Activated CD4-positive, alpha-beta memory T cell treated with anti-CD3 and anti-CD28 coated beads, Interleukin-2, amount 10 ng/mL, durations not matched to agents 7 days and 5 days (primary cell): ENCODE measurements at regions of chr1 and their contacts with region 1.

Region 1: DNA sequence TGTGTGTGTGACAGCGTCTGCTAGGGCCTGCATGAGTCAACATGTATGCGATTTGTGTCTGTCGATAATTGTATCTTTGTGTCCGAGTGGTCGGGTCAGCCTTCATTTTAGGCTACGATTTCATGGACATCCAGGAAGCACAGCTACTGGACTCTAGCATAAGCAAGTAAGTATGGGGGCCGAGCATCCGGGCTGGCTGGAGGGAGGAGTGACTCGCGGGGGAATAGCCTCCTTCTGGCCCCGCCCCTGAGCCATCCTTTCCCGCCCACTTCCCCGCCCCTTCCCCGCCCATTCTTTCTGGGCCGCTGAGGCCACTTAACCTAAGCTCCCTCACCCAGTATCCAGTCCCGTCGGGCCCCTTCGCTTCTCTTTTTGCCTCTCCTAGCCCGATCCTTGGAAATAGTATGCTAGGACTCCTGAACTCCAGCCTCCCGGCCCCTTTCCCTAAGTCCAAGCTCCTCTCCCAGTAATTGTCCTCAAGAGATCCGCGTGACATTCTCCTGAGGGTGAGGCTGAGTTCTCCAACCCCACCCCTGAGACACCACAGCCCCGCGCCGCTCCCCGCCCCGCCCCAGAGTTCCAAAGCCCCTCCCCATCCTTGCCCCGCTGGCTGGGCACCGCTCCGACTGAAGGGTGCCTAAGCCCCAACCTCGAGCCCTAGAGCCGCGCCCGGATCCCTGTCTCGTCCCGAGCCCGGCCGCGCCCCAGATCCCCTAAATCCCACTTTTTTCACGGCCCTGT is 1.2 kb downstream of the MAP3K6 start:
- DNase-seq: peak; percentile 86
- H3K4me3 Mint-ChIP-seq: peak overlapping the region; percentile 83
- H3K27ac Mint-ChIP-seq: peak overlapping the region; percentile 83
- H3K4me1 Mint-ChIP-seq: peaks cover 39% of the 10 kb centered on the region
- H3K27me3 Mint-ChIP-seq: no peaks in the 10 kb centered on the region

Region 2: DNA sequence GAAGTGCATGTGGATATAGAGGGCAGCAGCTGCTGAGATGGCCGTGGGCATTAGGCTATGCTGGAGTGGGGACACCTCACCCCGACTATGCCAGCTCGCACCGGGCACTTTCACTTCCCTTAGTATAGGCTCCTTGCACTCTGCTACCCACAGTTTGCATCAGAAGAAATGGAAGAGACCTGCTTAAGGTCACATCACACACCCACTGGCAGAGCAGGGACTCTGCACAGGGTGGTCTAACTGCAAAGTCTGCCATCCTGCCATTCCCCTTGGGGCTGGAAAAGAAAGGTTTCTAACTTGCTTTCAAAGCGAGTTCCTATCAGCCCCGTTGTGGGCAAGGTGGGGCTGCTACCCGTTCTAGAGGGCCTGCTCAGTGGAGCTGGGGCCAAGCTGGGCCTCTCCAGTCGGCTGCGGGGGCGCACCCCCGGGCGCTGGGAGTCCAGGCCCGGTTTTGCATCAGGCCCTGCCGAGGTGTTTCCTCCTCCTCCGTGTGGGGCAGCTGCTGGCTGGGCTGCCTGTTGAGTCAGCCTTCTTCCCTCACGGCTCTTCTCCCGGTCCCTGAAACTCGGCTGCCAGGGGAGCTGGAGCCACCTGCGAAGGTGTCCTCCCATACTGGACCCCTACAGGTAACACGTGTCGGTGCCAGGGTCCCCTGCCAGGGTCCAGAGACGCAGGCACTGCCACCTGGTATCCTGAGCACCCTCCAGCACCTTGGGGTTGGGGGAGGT is 23.9 kb before region 1 on chr1 and contains the start of gene SYTL1:
- CTCF ChIA-PET with region 1: interaction called, 9 read pairs
- POLR2A ChIA-PET with region 1: interaction called, 30 read pairs
- DNase-seq: peak; percentile 79
- H3K4me3 Mint-ChIP-seq: peak within 1 kb of the TSS; percentile 93
- H3K27ac Mint-ChIP-seq: peak within 1 kb of the TSS; percentile 95
- H3K4me1 Mint-ChIP-seq: peaks cover 46% of the 10 kb centered on the region
- H3K27me3 Mint-ChIP-seq: no peaks in the 10 kb centered on the region
- total RNA-seq, gene SYTL1: 124 to 136 TPM

Region 3: DNA sequence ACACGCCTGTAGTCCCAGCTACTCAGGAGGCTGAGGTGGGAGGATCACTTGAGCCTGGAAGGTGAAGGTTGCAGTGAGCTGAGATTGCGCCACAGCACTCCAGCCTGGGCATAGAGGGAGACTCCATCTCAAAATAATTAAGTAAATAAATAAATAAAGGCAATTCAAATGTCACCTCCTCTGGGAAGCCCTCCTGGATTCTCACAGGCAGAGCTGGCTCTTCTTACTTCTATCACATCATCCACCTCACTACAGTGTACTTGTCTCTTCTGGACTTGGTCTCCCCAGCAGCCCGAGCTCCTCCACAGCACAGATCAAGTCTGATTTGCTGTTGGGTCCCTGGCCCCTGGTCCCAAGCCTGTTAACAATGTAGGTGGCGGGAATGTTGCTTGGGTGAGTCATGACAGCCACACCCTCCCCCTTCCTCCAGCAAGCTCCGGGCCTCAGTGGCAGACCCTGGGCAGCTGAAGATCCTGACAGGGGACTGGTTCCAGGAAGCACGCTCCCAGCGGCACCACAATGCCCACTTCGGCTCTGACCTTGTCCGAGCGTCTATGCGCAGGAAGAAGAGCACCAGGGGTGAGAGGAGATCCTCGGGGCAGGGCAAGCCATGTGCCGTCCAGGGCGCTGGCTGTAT is 18.4 kb before region 1 on chr1:
- CTCF ChIA-PET with region 1: interaction called, 9 read pairs
- POLR2A ChIA-PET with region 1: interaction called, 30 read pairs
- DNase-seq: no peak
- H3K4me3 Mint-ChIP-seq: no peak overlapping the region
- H3K27ac Mint-ChIP-seq: no peak overlapping the region
- H3K4me1 Mint-ChIP-seq: peaks cover 30% of the 10 kb centered on the region
- H3K27me3 Mint-ChIP-seq: no peaks in the 10 kb centered on the region

Region 4: GRCh38 chr1:27383039-27383605 is 17.6 kb after region 1 on chr1 and contains the start of gene CD164L2:
- CTCF ChIA-PET with region 1: interaction called, 15 read pairs
- POLR2A ChIA-PET with region 1: interaction called, 3 read pairs
- DNase-seq: peak; percentile 53
- H3K4me3 Mint-ChIP-seq: no peak within 1 kb of the TSS
- H3K27ac Mint-ChIP-seq: no peak within 1 kb of the TSS
- H3K4me1 Mint-ChIP-seq: no peaks in the 10 kb centered on the region
- H3K27me3 Mint-ChIP-seq: peaks cover 15% of the 10 kb centered on the region
- total RNA-seq, gene CD164L2: not detected

Region 5: DNA sequence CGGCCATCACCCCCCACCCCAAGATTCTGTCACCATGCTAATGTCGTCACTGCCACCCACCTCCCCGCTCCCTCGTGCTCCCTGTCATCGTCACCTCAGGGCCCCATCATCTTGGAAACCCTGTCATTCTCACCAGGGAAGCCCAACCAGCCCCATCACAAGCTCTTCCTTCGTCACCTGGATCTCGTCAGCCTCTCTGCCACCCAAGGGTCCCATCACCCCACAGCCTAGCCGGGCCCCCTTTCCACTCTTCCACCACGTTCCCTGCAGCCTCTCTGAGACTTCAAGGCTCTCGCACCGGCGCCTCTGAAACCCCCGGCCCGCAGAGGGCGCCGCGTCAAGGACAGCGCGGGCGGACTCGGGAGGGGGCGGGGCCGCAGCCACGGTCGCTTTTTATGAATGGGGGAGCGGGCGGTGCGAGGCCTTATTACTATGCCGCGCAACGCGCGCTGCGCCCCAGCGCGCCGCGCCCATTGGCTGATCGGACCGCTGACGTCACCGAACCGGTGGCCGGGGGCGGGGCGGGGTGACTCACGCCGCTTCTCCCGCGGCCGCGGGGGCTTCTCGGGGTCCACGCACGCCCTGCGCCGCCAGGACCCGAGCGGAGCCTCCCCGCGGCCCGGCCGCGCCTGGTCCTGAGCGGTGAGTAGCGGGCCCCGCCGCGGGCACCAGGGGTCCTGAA is 26.7 kb after region 1 on chr1 and contains the start of gene GPR3:
- CTCF ChIA-PET with region 1: interaction called, 21 read pairs
- POLR2A ChIA-PET with region 1: interaction called, 6 read pairs
- DNase-seq: peak; percentile 95
- H3K4me3 Mint-ChIP-seq: peak within 1 kb of the TSS; percentile 74
- H3K27ac Mint-ChIP-seq: peak within 1 kb of the TSS; percentile 54
- H3K4me1 Mint-ChIP-seq: peaks cover 25% of the 10 kb centered on the region
- H3K27me3 Mint-ChIP-seq: peaks cover 3% of the 10 kb centered on the region
- total RNA-seq, gene GPR3: 0.58 to 0.65 TPM